Mammary epithelial cell (primary cell): ENCODE measurements at regions of chr7 and their contacts with region 1.

Region 1: GRCh38 chr7:110534241-110534931 is 556.5 kb upstream of the LRRN3 start:
- DNase-seq: peak; percentile 92
- H3K4me3 ChIP-seq: no peak overlapping the region
- H3K27ac ChIP-seq: peak overlapping the region; percentile 91
- H3K4me1 ChIP-seq: peaks cover 43% of the 10 kb centered on the region
- H3K27me3 ChIP-seq: no peaks in the 10 kb centered on the region
- CTCF ChIP-seq: peak in 1 of 2 donors; percentile 42

Region 2: GRCh38 chr7:109020251-109020650 is 1514.1 kb before region 1 on chr7:
- CTCF ChIA-PET with region 1: no interaction called
- dilution Hi-C with region 1: no loop called
- in situ Hi-C with region 1: no loop called
- intact Hi-C with region 1: no loop called
- DNase-seq: no peak
- H3K4me3 ChIP-seq: no peak overlapping the region
- H3K27ac ChIP-seq: no peak overlapping the region
- H3K4me1 ChIP-seq: no peaks in the 10 kb centered on the region
- H3K27me3 ChIP-seq: no peaks in the 10 kb centered on the region
- CTCF ChIP-seq: no peak

Region 3: DNA sequence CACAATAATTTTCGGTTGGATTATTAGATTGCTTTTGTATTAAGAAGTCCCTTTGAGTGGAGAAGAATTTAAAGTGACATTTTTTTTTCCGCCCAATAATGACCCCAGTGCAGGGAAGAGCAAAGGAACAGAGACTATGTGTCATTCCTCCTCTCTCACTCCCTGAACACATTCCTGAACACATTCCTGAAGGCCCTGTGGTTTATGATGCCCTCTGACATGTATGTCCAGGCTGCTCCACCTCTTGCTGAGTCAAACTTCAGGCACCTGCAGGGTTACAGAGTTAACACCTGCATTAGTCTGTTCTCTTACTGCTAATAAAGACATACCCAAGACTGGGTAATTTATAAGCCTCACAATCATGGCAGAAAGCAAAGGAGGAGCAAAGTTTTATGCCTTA is 147.5 kb before region 1 on chr7:
- CTCF ChIA-PET with region 1: no interaction called
- dilution Hi-C with region 1: no loop called
- in situ Hi-C with region 1: no loop called
- intact Hi-C with region 1: loop called (anchors 2 kb)
- DNase-seq: peak; percentile 89
- H3K4me3 ChIP-seq: no peak overlapping the region
- H3K27ac ChIP-seq: peak overlapping the region; percentile 83
- H3K4me1 ChIP-seq: peaks cover 36% of the 10 kb centered on the region
- H3K27me3 ChIP-seq: no peaks in the 10 kb centered on the region
- CTCF ChIP-seq: no peak

Region 4: GRCh38 chr7:110454713-110455112 is 79.7 kb before region 1 on chr7:
- CTCF ChIA-PET with region 1: no interaction called
- dilution Hi-C with region 1: no loop called
- in situ Hi-C with region 1: no loop called
- intact Hi-C with region 1: no loop called
- DNase-seq: no peak
- H3K4me3 ChIP-seq: no peak overlapping the region
- H3K27ac ChIP-seq: no peak overlapping the region
- H3K4me1 ChIP-seq: no peaks in the 10 kb centered on the region
- H3K27me3 ChIP-seq: no peaks in the 10 kb centered on the region
- CTCF ChIP-seq: no peak

Region 5: DNA sequence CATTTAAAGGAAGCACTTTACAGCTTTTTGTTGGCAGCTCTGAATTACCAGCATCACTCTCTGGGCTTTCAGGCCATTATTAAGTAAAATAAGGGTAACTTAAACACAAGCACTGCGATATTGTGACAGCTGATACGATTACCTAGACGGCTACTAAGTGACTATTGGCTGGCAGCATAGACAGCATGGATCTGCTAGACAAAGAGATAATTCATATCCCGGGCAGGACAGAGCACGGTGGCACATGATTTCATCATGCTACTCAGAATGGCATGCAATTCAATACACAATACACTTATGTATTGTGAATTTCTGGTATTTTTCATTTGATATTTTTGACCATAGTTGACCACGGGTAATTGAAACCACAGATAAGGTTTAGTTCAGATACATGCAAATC is 34.5 kb after region 1 on chr7:
- CTCF ChIA-PET with region 1: no interaction called
- dilution Hi-C with region 1: no loop called
- in situ Hi-C with region 1: no loop called
- intact Hi-C with region 1: loop called (anchors 5 kb)
- DNase-seq: peak; percentile 66
- H3K4me3 ChIP-seq: no peak overlapping the region
- H3K27ac ChIP-seq: peak overlapping the region; percentile 42
- H3K4me1 ChIP-seq: peaks cover 11% of the 10 kb centered on the region
- H3K27me3 ChIP-seq: no peaks in the 10 kb centered on the region
- CTCF ChIP-seq: no peak

Region 6: DNA sequence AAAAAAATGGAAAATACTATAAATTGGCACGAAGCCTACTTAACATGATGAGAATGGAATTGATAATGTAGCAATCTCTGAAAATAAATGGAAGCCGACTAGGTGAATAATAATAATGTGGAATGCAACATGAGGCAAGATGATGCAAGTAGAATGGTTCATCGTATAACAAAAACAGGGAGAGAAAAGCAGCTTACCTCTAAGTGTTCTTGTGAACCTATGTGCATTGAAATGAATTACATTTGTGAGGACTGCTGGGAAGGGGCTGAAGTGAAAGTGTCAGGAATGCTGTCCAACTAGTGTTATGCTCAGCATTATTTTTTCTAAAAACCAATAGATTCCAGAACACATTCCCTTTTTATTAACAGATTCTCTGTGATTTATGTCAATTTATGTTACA is 115.9 kb after region 1 on chr7:
- CTCF ChIA-PET with region 1: no interaction called
- dilution Hi-C with region 1: no loop called
- in situ Hi-C with region 1: no loop called
- intact Hi-C with region 1: loop called (anchors 10 kb)
- DNase-seq: no peak
- H3K4me3 ChIP-seq: no peak overlapping the region
- H3K27ac ChIP-seq: no peak overlapping the region
- H3K4me1 ChIP-seq: no peaks in the 10 kb centered on the region
- H3K27me3 ChIP-seq: no peaks in the 10 kb centered on the region
- CTCF ChIP-seq: no peak

Region 7: GRCh38 chr7:111012799-111013675 is 478.7 kb after region 1 on chr7:
- CTCF ChIA-PET with region 1: no interaction called
- dilution Hi-C with region 1: no loop called
- in situ Hi-C with region 1: no loop called
- intact Hi-C with region 1: no loop called
- DNase-seq: peak; percentile 44
- H3K4me3 ChIP-seq: no peak overlapping the region
- H3K27ac ChIP-seq: no peak overlapping the region
- H3K4me1 ChIP-seq: peaks cover 6% of the 10 kb centered on the region
- H3K27me3 ChIP-seq: no peaks in the 10 kb centered on the region
- CTCF ChIP-seq: no peak

Region 8: GRCh38 chr7:111159426-111159825 is 625.0 kb after region 1 on chr7:
- CTCF ChIA-PET with region 1: no interaction called
- dilution Hi-C with region 1: no loop called
- in situ Hi-C with region 1: no loop called
- intact Hi-C with region 1: no loop called
- DNase-seq: peak; percentile 35
- H3K4me3 ChIP-seq: no peak overlapping the region
- H3K27ac ChIP-seq: no peak overlapping the region
- H3K4me1 ChIP-seq: peaks cover 9% of the 10 kb centered on the region
- H3K27me3 ChIP-seq: no peaks in the 10 kb centered on the region
- CTCF ChIP-seq: no peak